CD8-positive, alpha-beta T cell (primary cell): ENCODE measurements at regions of chr22 and their contacts with region 1.

Region 1: DNA sequence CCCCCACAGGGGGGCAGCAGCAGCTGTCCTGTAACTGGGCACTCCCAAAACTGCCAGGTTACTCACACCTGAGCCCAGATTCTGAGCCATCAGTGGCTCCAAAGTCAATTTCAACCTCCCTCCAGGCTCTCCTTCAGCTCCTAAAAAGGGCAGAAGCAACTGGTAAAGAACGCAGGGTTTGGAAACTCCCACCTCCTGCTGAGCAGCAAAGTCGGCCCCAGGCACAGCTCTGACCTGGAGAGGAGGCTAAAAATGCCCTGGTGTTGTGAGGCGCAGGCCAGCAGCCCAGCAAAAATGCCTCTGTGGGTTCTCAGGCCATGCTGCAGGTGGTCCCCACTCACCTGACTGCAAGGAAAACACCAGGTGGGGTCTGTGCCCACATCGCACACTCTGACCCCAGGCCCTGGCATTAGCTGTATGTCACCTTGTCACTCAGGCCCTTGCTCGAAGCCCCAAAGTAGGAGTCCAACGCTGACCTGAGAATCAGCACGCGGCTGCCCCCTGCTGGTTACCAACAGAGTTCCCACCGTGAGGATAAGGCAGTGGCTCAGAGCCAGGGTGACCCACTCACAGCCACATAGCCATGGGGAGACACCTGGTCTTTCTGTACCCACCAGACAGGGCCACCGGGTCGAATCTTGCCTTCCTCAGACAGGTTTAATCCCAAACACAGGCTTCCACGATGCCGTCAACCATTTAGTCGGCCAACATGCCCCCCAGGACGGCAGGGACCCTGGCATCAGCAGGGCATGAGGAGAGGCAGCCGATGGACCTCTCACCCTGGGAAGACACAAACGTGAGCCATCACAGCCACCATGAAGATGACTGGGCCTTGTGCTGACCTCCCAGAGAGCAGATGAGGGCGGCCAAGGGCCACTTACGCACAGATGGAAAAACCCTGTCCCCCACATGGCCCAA is 11.1 kb downstream of the POLR3H start:
- DNase-seq: peak; percentile 31 to 74 (median 65)
- ATAC-seq: peak; percentile 80
- H3K4me3 ChIP-seq: no peak overlapping the region
- H3K4me3 Mint-ChIP-seq: no peak overlapping the region
- H3K27ac ChIP-seq: peak overlapping the region in 1 of 2 experiments; percentile 18
- H3K27ac Mint-ChIP-seq: no peak overlapping the region
- H3K4me1 ChIP-seq: no peaks in the 10 kb centered on the region
- H3K4me1 Mint-ChIP-seq: no peaks in the 10 kb centered on the region
- H3K27me3 ChIP-seq: no peaks in the 10 kb centered on the region
- H3K27me3 Mint-ChIP-seq: no peaks in the 10 kb centered on the region
- CTCF ChIP-seq: peak; percentile 66

Region 2: GRCh38 chr22:41022470-41023298 is 510.5 kb before region 1 on chr22:
- CTCF ChIA-PET with region 1: no interaction called
- POLR2A ChIA-PET with region 1: no interaction called
- intact Hi-C with region 1: no loop called
- DNase-seq: peak; percentile 46 to 89 (median 80)
- ATAC-seq: peak; percentile 77
- H3K4me3 ChIP-seq: peak overlapping the region; percentile 60 to 77
- H3K4me3 Mint-ChIP-seq: peak overlapping the region; percentile 81
- H3K27ac ChIP-seq: peak overlapping the region; percentile 74 to 84
- H3K27ac Mint-ChIP-seq: peak overlapping the region; percentile 84
- H3K4me1 ChIP-seq: peaks cover 12% of the 10 kb centered on the region
- H3K4me1 Mint-ChIP-seq: peaks cover 14% of the 10 kb centered on the region
- H3K27me3 ChIP-seq: peaks cover 0 to 4% of the 10 kb centered on the region in 2 experiments
- H3K27me3 Mint-ChIP-seq: no peaks in the 10 kb centered on the region
- CTCF ChIP-seq: no peak

Region 3: DNA sequence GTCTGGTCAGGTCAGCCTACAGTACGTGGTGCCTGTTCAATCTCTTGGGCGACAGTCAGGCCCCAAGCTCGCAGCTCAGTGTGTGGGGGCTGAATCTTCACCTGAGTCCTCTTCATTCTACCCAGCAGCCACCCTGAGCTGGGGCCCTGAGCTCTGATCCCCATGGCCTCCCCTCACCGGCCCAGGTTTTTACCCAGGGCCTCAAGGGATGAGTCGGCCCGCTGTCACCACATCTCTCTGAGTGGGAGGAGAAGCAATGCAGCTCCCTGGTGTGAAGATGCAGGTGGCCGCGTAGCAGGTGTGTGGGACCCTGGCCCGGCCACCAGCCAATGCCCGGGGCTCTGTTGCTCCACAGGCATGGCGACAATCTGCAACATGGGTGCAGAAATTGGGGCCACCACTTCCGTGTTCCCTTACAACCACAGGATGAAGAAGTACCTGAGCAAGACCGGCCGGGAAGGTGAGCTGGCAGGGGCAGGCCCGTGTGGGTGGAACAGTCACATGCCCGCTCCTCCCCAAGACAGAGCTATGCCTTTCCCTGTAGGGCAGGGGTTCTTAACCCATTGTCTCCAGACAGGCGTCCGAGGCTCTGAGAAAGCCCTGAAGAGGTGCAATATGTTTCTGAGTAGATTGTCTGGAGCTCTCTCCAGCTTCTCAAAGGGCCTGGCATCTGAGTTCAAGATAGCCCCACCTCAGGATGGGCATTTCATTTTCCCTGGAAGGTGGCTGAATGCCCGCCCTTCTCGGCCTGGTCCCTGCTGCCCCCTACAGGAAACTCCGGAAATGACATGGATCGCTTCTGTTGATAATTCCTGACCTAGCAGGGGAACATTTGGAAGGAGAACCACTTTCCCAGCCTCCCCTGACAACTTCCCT is 15.8 kb before region 1 on chr22:
- CTCF ChIA-PET with region 1: interaction called, 21 read pairs
- POLR2A ChIA-PET with region 1: no interaction called
- intact Hi-C with region 1: no loop called
- DNase-seq: peak in 6 of 9 experiments; percentile 23 to 62 (median 48)
- ATAC-seq: no peak
- H3K4me3 ChIP-seq: no peak overlapping the region
- H3K4me3 Mint-ChIP-seq: no peak overlapping the region
- H3K27ac ChIP-seq: no peak overlapping the region
- H3K27ac Mint-ChIP-seq: no peak overlapping the region
- H3K4me1 ChIP-seq: no peaks in the 10 kb centered on the region
- H3K4me1 Mint-ChIP-seq: no peaks in the 10 kb centered on the region
- H3K27me3 ChIP-seq: no peaks in the 10 kb centered on the region
- H3K27me3 Mint-ChIP-seq: no peaks in the 10 kb centered on the region
- CTCF ChIP-seq: peak; percentile 59